Endothelial cell of umbilical vein (primary cell): ENCODE measurements at regions of chr7 and their contacts with region 1.

Region 1: DNA sequence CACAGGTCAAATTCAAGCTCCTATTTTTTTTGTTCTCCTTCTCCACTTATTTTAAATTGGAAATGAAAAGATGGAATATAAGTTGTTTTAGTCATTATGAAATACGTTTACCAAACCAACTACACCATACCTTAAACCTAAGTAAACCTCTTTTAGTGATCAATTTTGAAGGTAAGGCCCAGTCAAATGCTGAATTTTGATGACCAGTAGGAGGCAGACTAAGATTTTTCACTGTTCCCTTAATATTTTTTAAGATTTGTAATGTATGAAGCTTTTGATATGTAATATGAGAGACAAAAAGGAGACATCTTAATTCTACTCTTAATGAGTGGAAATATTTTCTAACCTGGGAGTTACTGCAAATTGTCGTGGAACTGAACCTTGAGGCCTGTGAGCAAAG is 311.6 kb downstream of the EXOC4 start:
- DNase-seq: no peak
- H3K4me3 ChIP-seq: no peak overlapping the region
- H3K27ac ChIP-seq: no peak overlapping the region
- H3K4me1 ChIP-seq: no peaks in the 10 kb centered on the region
- H3K27me3 ChIP-seq: no peaks in the 10 kb centered on the region
- CTCF ChIP-seq: no peak
- POLR2A ChIP-seq: no peak

Region 2: DNA sequence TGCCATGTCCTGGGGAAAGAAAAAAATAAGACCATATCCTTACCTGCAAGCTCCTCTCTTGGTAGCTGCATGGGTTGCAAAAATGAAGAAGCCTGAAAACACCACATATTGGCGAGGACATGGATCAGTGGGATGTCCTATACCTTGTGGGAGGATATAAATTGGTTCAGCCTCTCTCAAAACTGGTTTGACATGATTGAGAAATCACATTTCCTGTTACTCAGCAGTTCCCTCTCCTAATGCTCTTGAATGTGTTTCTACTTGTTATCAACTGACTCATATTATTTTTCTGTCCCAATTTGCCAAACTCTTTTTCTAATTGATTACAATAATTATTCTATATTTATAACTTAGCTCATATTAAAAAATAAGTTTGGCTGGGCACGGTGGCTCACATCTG is 68.6 kb after region 1 on chr7:
- CTCF ChIA-PET with region 1: no interaction called
- POLR2A ChIA-PET with region 1: no interaction called
- dilution Hi-C with region 1: no loop called
- intact Hi-C with region 1: no loop called
- DNase-seq: peak; percentile 23
- H3K4me3 ChIP-seq: no peak overlapping the region
- H3K27ac ChIP-seq: no peak overlapping the region
- H3K4me1 ChIP-seq: no peaks in the 10 kb centered on the region
- H3K27me3 ChIP-seq: no peaks in the 10 kb centered on the region
- CTCF ChIP-seq: no peak
- POLR2A ChIP-seq: no peak

Region 3: DNA sequence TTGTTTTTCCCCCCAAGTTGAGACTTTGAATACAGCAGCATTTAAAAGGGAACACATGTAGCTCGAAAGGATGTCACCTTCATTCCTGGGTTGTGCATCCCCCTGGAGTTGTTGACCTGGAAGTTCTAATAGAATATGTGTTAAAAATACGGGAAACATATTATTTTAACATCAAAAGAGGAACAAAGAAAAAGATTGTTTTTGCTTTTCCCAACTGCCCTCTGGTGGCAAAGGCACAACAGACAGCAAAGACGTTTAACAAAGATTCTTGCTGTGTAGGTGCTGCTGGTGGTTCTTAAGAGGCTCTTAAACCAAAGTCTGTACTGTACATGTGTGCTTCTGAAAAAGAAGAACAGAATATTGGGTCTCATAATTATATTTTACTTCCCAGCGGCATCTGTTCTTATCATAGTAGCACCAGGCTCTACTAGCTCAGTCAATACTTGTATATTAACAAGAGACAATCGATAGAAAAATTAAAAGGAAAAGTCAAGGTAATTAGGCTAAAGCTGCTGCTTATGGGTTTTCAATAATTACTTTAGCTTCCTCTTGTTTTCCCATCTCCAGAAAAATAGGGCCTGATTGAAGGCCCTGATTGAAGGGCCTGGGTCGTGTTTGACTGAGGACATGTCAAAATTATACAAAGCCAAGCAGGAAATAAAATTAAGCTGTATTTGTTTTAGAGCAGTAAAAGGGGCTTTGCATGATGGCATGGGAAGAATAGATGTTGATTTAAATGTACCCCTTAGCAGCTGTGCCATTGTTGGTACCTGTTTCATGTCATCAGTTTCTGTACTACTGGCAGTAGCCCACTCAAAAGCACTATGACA is 178.4 kb after region 1 on chr7:
- CTCF ChIA-PET with region 1: interaction called, 11 read pairs
- POLR2A ChIA-PET with region 1: no interaction called
- dilution Hi-C with region 1: no loop called
- intact Hi-C with region 1: no loop called
- DNase-seq: peak; percentile 48
- H3K4me3 ChIP-seq: no peak overlapping the region
- H3K27ac ChIP-seq: no peak overlapping the region
- H3K4me1 ChIP-seq: no peaks in the 10 kb centered on the region
- H3K27me3 ChIP-seq: no peaks in the 10 kb centered on the region
- CTCF ChIP-seq: peak; percentile 34 to 58
- POLR2A ChIP-seq: no peak

Region 4: DNA sequence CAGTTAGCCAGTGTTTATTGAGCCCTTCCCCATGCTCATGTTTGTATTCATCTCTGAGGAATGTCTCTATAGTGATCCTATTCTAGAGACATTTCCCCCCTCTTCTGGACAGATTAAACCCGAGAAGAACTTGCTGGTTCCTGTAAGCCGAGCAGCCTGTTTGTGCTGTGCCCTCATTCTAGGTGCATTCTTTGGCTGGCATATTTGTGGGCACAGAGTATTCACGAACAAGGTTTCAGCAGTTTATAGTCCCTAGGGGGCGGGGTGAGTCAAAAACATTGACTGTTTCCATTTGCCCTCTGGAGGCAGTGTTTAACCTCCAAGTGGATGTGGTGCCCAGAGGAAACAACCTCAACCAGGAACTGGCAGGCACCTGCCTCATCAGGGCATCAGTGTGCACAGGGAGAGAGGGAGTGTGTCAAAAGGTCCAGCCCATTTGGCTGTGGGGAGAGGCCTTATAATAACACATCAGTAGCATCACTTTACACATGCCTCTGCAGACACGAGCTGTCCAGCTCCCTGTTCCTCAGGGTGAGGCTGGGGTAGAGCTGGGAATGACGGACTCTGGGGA is 289.3 kb after region 1 on chr7:
- CTCF ChIA-PET with region 1: no interaction called
- POLR2A ChIA-PET with region 1: no interaction called
- dilution Hi-C with region 1: no loop called
- intact Hi-C with region 1: loop called (anchors 5 kb)
- DNase-seq: peak; percentile 27
- H3K4me3 ChIP-seq: no peak overlapping the region
- H3K27ac ChIP-seq: no peak overlapping the region
- H3K4me1 ChIP-seq: peaks cover 15% of the 10 kb centered on the region
- H3K27me3 ChIP-seq: no peaks in the 10 kb centered on the region
- CTCF ChIP-seq: peak; percentile 30 to 34
- POLR2A ChIP-seq: no peak

Region 5: GRCh38 chr7:133992153-133992552 is 427.7 kb after region 1 on chr7:
- CTCF ChIA-PET with region 1: no interaction called
- POLR2A ChIA-PET with region 1: no interaction called
- dilution Hi-C with region 1: no loop called
- intact Hi-C with region 1: loop called (anchors 5 kb)
- DNase-seq: no peak
- H3K4me3 ChIP-seq: no peak overlapping the region
- H3K27ac ChIP-seq: no peak overlapping the region
- H3K4me1 ChIP-seq: no peaks in the 10 kb centered on the region
- H3K27me3 ChIP-seq: no peaks in the 10 kb centered on the region
- CTCF ChIP-seq: no peak
- POLR2A ChIP-seq: no peak